Motor neuron (in vitro differentiated cells): ENCODE measurements at regions of chr1 and their contacts with region 1.

Region 1: DNA sequence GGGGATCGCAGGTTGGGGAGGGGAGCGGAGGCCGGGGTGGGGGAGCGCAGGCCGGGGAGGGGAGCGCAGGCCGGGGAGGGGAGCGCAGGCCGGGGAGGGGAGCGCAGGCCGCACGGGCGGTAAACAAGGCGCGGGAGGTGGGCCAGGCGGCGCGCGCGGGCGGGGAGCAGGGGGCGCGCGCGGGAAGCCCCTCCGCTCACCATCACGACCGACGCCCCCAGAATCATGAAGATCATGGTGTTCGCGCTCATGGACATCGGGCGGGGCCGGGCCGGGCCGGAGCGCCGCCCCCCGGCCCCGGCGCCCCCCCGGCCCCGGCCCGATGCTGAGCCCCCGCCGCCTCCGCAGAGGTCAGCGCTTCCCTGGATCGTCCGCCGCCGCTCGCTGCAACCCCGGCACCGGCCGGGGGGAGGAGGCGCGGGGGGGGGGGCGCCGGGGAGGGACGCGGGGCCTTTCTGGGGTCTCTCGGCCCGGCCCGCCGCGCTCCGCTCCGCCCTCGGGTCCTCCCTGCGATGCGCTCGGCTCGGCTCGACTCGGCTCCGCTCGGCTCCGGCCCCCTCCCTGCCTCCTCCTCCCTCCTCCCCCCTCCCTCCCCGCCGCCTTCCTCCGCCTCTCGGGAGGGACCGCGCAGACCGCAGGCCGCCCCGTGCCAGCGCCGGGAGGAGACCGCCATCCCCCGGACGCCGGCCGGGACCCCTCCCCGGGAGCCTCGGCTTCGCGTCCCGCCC is at the start of gene TMEM240:
- ATAC-seq: peak; percentile 66 to 86 (median 72)
- H3K4me3 ChIP-seq: peak within 1 kb of the TSS; percentile 36 to 80 (median 46)
- H3K27ac ChIP-seq: peak within 1 kb of the TSS; percentile 73 to 85
- H3K4me1 ChIP-seq: peaks cover 14 to 28% of the 10 kb centered on the region in 2 donors
- total RNA-seq, gene TMEM240: 0.61 to 14.0 (median 10.5) TPM

Region 2: GRCh38 chr1:1349256-1350012 is 190.8 kb before region 1 on chr1 and contains the start of gene DVL1:
- in situ Hi-C with region 1: no loop called
- ATAC-seq: peak; percentile 31 to 87 (median 82)
- H3K4me3 ChIP-seq: peak within 1 kb of the TSS; percentile 56 to 85 (median 69)
- H3K27ac ChIP-seq: peak within 1 kb of the TSS; percentile 93 to 97
- H3K4me1 ChIP-seq: peaks cover 28 to 37% of the 10 kb centered on the region in 2 donors
- total RNA-seq, gene DVL1: 47.8 to 81.4 (median 56.8) TPM

Region 3: DNA sequence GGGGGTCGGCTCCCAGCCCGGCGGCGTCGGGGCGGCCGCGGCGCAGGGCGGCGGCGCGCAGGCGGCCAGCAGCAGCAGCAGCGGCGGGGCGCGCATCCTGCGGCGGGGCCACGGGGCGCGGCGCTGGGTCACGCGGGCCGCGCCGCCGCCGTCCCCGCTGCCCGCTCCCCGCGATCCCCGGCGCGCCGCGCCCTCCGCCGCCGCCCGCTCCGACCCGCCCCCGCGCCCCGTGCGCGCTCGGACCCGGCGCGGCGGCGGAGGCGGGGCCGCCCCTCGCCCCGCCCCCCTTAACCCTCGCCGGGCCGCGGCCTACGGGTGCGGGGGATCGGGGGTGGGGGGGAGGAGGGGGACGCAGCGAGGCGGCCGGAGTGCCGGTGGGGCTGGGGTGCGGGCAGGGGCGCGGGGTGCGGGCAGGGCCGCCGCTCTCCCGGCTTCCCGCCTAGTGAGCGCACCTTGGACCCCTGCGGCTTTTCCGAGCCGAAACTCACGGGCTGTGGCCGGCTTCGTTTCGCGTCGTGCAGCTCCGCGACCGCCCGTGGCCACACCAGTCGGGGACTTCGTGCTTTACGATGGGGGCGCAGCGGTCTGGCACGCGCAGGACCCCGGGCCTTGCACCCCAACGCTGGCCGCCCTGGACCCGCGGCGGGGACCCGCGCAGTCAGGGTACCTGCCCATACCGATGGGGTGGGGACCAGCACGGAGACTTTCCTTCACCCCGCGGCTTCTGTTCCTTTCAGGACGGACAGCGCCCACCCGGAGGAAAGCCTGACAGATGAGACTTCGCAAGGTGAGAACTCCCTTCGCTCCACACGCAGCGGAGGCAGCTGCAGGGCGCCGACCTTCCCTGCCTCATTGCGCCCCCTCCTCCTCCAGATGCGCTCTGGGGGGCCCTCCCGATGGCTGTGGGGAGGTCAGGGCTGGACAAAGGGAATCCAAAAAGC is 59.9 kb after region 1 on chr1 and contains the start of gene FNDC10:
- in situ Hi-C with region 1: loop called in 1 of 9 experiments (anchors 10 kb)
- ATAC-seq: peak; percentile 33 to 57 (median 48)
- H3K4me3 ChIP-seq: peak within 1 kb of the TSS; percentile 36 to 61 (median 46)
- H3K27ac ChIP-seq: peak within 1 kb of the TSS in 1 of 2 donors; percentile 56
- H3K4me1 ChIP-seq: peaks cover 21 to 25% of the 10 kb centered on the region in 2 donors
- total RNA-seq, gene FNDC10: 4.6 to 10.3 (median 6.9) TPM

Region 4: DNA sequence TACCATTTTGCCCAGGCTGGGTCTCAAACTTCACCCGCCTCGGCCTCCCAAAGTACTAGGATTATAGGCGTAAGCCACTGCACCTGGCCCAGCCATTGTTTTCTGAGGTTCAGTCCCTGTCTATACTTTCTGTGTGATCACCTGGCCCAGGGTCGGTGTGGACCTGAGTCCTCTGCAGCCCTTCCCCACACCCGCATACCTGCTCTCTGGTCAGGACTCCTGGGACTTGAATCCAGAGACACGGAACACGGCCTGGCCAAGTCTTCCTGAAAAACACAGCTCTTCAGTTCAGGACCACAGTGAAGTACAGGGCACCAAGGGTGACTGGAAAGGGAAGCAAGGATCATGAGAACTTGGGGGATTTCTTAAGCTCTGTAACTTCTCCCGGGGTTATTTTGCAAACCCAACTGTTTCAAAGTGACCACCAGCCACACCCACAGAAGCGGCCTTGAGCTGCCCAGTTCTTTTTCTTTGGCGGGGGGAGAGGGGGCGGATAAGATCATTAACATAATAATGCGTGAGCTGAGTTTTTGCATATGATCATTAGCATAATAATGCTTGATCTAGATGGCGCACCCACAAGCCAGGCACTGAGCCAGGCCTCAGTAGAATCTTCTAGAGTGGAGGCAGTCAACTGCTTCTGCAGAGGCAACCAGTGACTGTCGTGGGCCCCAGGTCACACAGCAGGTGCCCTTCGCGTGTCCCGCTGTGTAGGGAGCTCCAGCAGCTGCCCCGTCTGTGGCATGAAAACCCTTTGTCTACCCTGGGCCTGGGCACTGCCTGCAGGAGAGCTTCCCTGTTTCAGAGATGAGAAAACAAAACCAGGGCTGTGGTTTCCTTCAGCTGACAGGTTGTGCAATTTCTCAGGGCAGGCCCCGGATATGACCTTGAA is 239.7 kb after region 1 on chr1:
- in situ Hi-C with region 1: no loop called
- ATAC-seq: peak; percentile 6 to 45 (median 38)
- H3K4me3 ChIP-seq: peak overlapping the region in 1 of 5 donors; percentile 89
- H3K27ac ChIP-seq: peak overlapping the region; percentile 48 to 55
- H3K4me1 ChIP-seq: peaks cover 38 to 41% of the 10 kb centered on the region in 2 donors